Activated T-helper 2 cell treated with anti-CD3 and anti-CD28 coated beads, Interferon-gamma antibody, Interleukin-2, Interleukin-4, amounts not matched to agents 10 μg/mL and 5 μg/mL and 100 μg/mL, durations not matched to agents 14 hours and 24 hours and 36 hours (primary cell): ENCODE measurements at regions of chr2 and their contacts with region 1.

Region 1: DNA sequence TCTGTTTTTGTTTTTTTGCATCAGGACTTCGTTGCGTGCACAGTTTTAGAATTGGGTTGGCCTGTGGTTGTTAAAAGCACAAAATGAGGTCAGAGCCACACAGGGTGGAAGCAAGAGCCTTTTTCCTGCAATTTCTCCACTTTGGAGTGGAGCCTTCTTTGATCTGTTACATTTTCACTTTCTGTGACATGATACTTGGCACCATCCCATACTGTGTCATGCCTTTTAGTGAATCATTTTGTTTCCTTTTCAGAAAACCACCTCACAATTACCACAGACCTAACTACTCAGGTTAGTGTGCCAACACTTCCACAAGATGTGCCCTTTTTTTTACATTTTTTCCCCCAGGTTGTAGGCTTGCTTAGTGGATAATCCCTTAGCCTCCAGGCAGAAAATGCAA is 32.5 kb downstream of the MERTK start:
- DNase-seq: no peak
- H3K4me3 Mint-ChIP-seq: no peak overlapping the region
- H3K27ac Mint-ChIP-seq: peak overlapping the region; percentile 48
- H3K4me1 Mint-ChIP-seq: peaks cover 10% of the 10 kb centered on the region
- H3K27me3 Mint-ChIP-seq: peaks cover 12% of the 10 kb centered on the region

Region 2: GRCh38 chr2:111982822-111983221 is 51.9 kb after region 1 on chr2:
- intact Hi-C with region 1: loop called (anchors 5 kb)
- DNase-seq: no peak
- H3K4me3 Mint-ChIP-seq: no peak overlapping the region
- H3K27ac Mint-ChIP-seq: peak overlapping the region; percentile 77
- H3K4me1 Mint-ChIP-seq: peaks cover 21% of the 10 kb centered on the region
- H3K27me3 Mint-ChIP-seq: peaks cover 2% of the 10 kb centered on the region